GM23248 (cell line): ENCODE measurements at regions of chr11 and their contacts with region 1.

Region 1: DNA sequence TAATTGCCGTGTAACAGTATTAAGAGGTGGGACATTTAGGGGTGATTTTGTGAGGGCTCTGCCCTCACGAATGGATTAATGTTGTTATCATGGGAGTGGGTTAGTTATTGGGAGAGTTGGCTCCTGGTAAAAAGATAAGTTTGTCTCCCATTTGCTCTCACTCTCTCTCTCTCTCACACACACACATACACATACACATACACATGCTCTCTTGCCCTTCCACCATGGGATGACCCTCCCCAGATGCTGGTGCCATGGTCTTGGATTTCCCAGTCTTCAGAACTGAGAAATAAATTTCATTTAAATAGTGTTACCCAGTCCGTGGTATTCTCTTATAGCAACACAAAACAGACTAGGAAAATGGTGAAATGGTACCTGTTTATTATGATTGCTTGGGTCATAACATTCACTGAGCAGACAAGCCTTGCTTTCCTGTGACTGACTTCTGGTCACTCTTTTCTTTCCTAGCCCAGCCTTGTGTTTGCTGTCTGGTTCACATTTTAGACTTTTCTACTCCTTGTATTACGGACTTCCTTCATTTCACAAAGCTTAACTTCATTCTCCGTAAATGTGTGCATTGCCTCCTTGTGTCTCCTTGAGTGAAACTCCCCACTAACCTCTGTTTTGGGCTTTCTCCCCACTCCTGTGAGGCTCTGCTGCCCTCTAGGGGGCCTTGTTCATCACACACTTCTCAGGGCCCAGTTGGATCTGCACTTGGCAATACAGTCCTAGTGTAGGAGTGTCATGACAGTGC is 206.5 kb upstream of the CTSC start:
- DNase-seq: peak; percentile 95
- H3K4me3 ChIP-seq: no peak overlapping the region
- H3K27ac ChIP-seq: peak overlapping the region; percentile 37
- H3K4me1 ChIP-seq: peaks cover 16% of the 10 kb centered on the region
- H3K27me3 ChIP-seq: no peaks in the 10 kb centered on the region

Region 2: DNA sequence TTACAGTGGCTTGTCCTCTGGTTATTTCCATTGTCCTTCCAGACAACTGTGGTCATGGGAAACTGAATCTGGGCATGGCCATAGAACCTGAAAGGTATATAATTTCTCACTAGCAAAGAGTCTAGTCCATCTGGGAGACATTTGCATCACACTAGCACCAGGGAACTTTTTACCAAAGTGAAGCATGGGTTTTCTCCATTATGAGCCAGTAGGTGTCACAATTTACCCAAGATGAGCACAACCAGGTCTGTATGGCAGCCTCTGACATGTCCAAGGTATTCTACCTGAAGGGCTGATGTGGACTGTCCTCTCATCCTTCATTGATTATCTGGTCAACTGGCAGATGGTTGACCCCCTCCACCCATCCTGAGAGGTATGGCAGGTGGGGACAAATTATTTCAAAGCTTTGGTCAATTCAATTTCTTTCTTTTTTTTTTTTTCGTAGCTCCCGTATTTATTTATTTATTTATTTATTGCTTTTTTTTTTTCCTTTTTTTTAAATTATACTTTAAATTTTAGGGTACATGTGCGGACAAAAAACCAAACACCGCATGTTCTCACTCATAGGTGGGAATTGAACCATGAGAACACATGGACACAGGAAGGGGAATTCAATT is 1080.5 kb before region 1 on chr11:
- in situ Hi-C with region 1: loop called (anchors 25 kb)
- DNase-seq: peak; percentile 64
- H3K4me3 ChIP-seq: no peak overlapping the region
- H3K27ac ChIP-seq: no peak overlapping the region
- H3K4me1 ChIP-seq: peaks cover 11% of the 10 kb centered on the region
- H3K27me3 ChIP-seq: no peaks in the 10 kb centered on the region

Region 3: GRCh38 chr11:87878373-87878779 is 665.7 kb before region 1 on chr11:
- in situ Hi-C with region 1: loop called (anchors 25 kb)
- DNase-seq: peak; percentile 74
- H3K4me3 ChIP-seq: no peak overlapping the region
- H3K27ac ChIP-seq: 0 out of 2 replicates have a peak overlapping the region, but pooled peaks have one; percentile 6
- H3K4me1 ChIP-seq: peaks cover 12% of the 10 kb centered on the region
- H3K27me3 ChIP-seq: no peaks in the 10 kb centered on the region

Region 4: DNA sequence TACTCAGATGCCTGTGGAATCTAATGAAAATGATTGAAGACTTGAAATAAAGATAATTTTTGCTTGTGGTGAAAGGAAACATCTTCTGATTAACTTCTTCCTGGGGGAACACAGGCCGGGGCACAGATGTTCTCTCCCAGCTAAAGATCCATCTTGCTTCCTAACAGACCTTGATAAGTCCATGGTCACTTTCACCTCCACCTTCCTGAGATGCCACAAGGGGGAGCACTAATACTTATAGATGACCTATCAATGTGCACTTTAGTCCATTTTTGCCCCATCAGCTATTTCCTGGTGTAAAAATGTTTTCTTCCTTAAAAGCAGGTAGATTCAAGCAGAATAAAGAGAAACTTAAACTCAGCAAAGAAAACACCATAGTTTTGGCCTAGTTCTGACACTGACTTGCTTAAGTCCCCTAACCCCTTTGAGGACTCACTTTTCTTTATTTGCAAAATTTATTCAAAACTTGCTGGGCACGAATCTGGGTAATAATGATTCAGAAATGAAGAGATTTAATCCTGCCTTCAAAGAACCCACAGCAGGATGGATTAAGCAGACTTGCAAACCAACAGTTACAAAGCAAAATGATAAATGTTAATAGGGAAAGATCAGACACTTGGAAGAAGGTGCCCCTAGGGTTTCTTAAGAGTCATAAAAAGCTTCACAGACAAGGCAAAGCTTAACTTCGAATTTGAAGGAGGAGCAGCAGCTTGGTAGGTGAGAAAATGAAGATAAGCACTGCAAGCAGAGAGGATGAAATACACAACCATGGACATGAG is 527.5 kb before region 1 on chr11:
- in situ Hi-C with region 1: loop called (anchors 25 kb)
- DNase-seq: peak; percentile 84
- H3K4me3 ChIP-seq: no peak overlapping the region
- H3K27ac ChIP-seq: no peak overlapping the region
- H3K4me1 ChIP-seq: no peaks in the 10 kb centered on the region
- H3K27me3 ChIP-seq: no peaks in the 10 kb centered on the region

Region 5: GRCh38 chr11:88104408-88104807 is 439.7 kb before region 1 on chr11:
- in situ Hi-C with region 1: no loop called
- DNase-seq: peak; percentile 6
- H3K4me3 ChIP-seq: no peak overlapping the region
- H3K27ac ChIP-seq: no peak overlapping the region
- H3K4me1 ChIP-seq: 0 out of 2 replicates have a peak, but pooled peaks cover 8% of the 10 kb centered on the region
- H3K27me3 ChIP-seq: no peaks in the 10 kb centered on the region

Region 6: GRCh38 chr11:88231894-88232482 is 312.1 kb before region 1 on chr11:
- in situ Hi-C with region 1: loop called (anchors 25 kb)
- DNase-seq: peak; percentile 64
- H3K4me3 ChIP-seq: no peak overlapping the region
- H3K27ac ChIP-seq: no peak overlapping the region
- H3K4me1 ChIP-seq: no peaks in the 10 kb centered on the region
- H3K27me3 ChIP-seq: no peaks in the 10 kb centered on the region